ENCODE measurements at regions of chr4 and their contacts with region 1.

Region 1: DNA sequence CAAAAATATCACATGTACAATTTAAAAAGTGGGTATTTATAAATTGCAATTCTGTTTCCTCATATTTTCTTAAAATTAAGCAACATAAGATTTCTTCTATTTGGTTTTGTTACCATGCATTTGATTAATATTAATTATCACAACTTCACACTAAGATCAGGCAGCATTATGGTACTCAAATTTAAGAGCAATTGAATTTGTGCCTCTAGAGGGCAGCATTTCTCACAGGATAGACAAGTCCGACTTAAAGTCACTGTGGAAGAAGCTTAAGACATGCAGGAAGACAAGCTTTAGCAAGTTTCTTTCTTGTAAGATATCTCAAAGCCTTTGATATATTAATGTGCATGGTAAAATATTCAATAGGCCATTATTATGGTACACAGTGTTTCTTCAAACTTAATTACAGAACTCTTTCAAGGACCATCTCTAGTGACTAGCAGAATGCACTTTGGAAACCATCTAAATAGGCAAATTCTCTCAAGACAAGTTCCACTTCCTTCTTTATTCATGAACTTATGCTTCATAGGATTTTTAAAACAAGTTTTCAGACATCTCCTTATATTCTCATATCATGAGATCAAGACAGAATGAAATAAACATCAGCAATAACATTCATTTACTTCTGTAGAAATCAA is 35.0 kb downstream of the FBXW7 start:
- DNase-seq: peak in 7 of 9 donors; percentile 70 to 85 (median 79)
- ATAC-seq: peak; percentile 90
- H3K4me3 ChIP-seq: no peak overlapping the region
- H3K4me3 Mint-ChIP-seq: no peak overlapping the region
- H3K27ac ChIP-seq: no peak overlapping the region
- H3K27ac Mint-ChIP-seq: peak overlapping the region in 4 of 9 donors; percentile 56 to 87 (median 68)
- H3K4me1 ChIP-seq: no peaks in the 10 kb centered on the region
- H3K4me1 Mint-ChIP-seq: peaks cover 20 to 53% (median 41%) of the 10 kb centered on the region in 7 donors
- H3K27me3 ChIP-seq: no peaks in the 10 kb centered on the region
- H3K27me3 Mint-ChIP-seq: no peaks in the 10 kb centered on the region

Region 2: DNA sequence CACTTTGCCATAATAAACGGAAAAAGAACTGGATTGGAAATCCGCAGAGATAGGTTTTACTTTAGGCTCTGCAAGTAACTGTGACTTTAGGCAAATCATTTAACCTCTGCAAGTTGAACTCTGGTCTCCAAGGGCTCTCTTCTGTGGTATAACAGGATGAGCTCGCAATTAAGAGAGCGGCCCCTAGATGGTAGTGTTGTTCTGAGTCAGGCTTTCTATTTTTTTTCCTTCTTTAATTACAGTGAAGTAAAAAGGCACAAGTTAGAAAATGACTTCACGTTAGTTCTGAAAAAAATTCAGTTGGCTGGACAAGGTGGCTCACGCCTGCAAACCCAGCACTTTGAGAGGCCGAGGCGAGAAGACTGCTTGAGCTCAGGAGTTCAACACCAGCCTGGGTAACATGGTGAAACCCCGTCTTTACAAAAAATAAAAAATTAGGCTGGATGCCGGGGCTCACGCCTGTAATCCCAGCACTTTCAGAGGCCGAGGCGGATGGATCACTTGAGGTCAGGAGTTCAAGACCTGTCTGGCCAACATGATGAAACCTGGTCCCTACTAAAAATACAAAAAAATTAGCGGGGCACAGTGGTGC is 1383.5 kb before region 1 on chr4:
- CTCF ChIA-PET with region 1: no interaction called
- POLR2A ChIA-PET with region 1: no interaction called
- intact Hi-C with region 1: loop called in 1 of 2 experiments (anchors 1 kb)
- DNase-seq: peak in 8 of 9 donors; percentile 22 to 63 (median 54)
- ATAC-seq: peak; percentile 86
- H3K4me3 ChIP-seq: no peak overlapping the region
- H3K4me3 Mint-ChIP-seq: no peak overlapping the region
- H3K27ac ChIP-seq: no peak overlapping the region
- H3K27ac Mint-ChIP-seq: peak overlapping the region in 1 of 9 donors; percentile 59
- H3K4me1 ChIP-seq: no peaks in the 10 kb centered on the region
- H3K4me1 Mint-ChIP-seq: peaks cover 0 to 8% (median 6%) of the 10 kb centered on the region in 7 donors
- H3K27me3 ChIP-seq: no peaks in the 10 kb centered on the region
- H3K27me3 Mint-ChIP-seq: no peaks in the 10 kb centered on the region

Region 3: GRCh38 chr4:152454398-152455011 is 46.4 kb before region 1 on chr4:
- CTCF ChIA-PET with region 1: interaction called, 6 read pairs
- POLR2A ChIA-PET with region 1: no interaction called
- intact Hi-C with region 1: loop called (anchors 1 to 2 kb)
- DNase-seq: peak in 2 of 9 donors; percentile 6 to 7
- ATAC-seq: no peak
- H3K4me3 ChIP-seq: no peak overlapping the region
- H3K4me3 Mint-ChIP-seq: no peak overlapping the region
- H3K27ac ChIP-seq: no peak overlapping the region
- H3K27ac Mint-ChIP-seq: no peak overlapping the region
- H3K4me1 ChIP-seq: peaks cover 5 to 9% of the 10 kb centered on the region in 2 donors
- H3K4me1 Mint-ChIP-seq: peaks cover 30 to 53% (median 41%) of the 10 kb centered on the region in 7 donors
- H3K27me3 ChIP-seq: no peaks in the 10 kb centered on the region
- H3K27me3 Mint-ChIP-seq: no peaks in the 10 kb centered on the region

Region 4: DNA sequence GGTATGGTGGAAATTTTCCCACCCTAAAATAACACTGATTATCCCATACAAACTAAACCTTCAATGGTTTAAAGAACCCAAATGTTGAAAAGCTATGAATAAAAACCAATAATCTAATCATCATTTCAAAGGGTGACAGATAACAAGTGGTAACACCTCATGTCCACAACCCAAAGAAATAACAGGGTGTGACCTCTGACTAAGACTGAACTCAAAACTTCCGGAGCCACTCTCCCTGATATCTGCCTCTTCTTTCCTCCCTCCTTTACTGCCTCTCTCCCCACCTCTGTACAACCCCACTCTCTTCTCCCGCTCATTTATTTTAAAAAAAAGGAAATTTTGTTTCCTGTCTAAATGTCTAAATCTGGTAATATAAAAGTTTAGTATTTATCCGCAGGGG is 23.5 kb after region 1 on chr4:
- CTCF ChIA-PET with region 1: interaction called, 16 read pairs
- POLR2A ChIA-PET with region 1: interaction called, 3 read pairs
- intact Hi-C with region 1: no loop called
- DNase-seq: no peak
- ATAC-seq: peak; percentile 67
- H3K4me3 ChIP-seq: no peak overlapping the region
- H3K4me3 Mint-ChIP-seq: peak overlapping the region in 2 of 10 donors; percentile 2 to 11
- H3K27ac ChIP-seq: no peak overlapping the region
- H3K27ac Mint-ChIP-seq: peak overlapping the region in 1 of 9 donors; percentile 60
- H3K4me1 ChIP-seq: peaks cover 0 to 27% of the 10 kb centered on the region in 2 donors
- H3K4me1 Mint-ChIP-seq: peaks cover 43 to 88% (median 71%) of the 10 kb centered on the region in 7 donors
- H3K27me3 ChIP-seq: no peaks in the 10 kb centered on the region
- H3K27me3 Mint-ChIP-seq: no peaks in the 10 kb centered on the region

Region 5: GRCh38 chr4:152646221-152646620 is 145.3 kb after region 1 on chr4:
- CTCF ChIA-PET with region 1: interaction called, 167 read pairs
- POLR2A ChIA-PET with region 1: interaction called, 4 read pairs
- intact Hi-C with region 1: no loop called
- DNase-seq: no peak
- ATAC-seq: no peak
- H3K4me3 ChIP-seq: no peak overlapping the region
- H3K4me3 Mint-ChIP-seq: no peak overlapping the region
- H3K27ac ChIP-seq: no peak overlapping the region
- H3K27ac Mint-ChIP-seq: peak overlapping the region in 4 of 9 donors; percentile 25 to 78 (median 40)
- H3K4me1 ChIP-seq: peaks cover 0 to 15% of the 10 kb centered on the region in 2 donors
- H3K4me1 Mint-ChIP-seq: peaks cover 0 to 26% (median 9%) of the 10 kb centered on the region in 7 donors
- H3K27me3 ChIP-seq: no peaks in the 10 kb centered on the region
- H3K27me3 Mint-ChIP-seq: no peaks in the 10 kb centered on the region

Region 6: GRCh38 chr4:153095448-153096204 is 594.7 kb after region 1 on chr4:
- CTCF ChIA-PET with region 1: no interaction called
- POLR2A ChIA-PET with region 1: no interaction called
- intact Hi-C with region 1: no loop called
- DNase-seq: no peak
- ATAC-seq: no peak
- H3K4me3 ChIP-seq: no peak overlapping the region
- H3K4me3 Mint-ChIP-seq: no peak overlapping the region
- H3K27ac ChIP-seq: no peak overlapping the region
- H3K27ac Mint-ChIP-seq: peak overlapping the region in 4 of 9 donors; percentile 15 to 78 (median 62)
- H3K4me1 ChIP-seq: no peaks in the 10 kb centered on the region
- H3K4me1 Mint-ChIP-seq: peaks cover 0 to 5% (median 4%) of the 10 kb centered on the region in 7 donors
- H3K27me3 ChIP-seq: no peaks in the 10 kb centered on the region
- H3K27me3 Mint-ChIP-seq: peaks cover 0 to 7% (median 0%) of the 10 kb centered on the region in 5 donors